ENCODE measurements at regions of chr1 and their contacts with region 1.

Region 1: GRCh38 chr1:235855811-235856429 is 10.8 kb downstream of the LYST start:
- DNase-seq: no peak
- H3K4me3 Mint-ChIP-seq: no peak overlapping the region
- H3K27ac Mint-ChIP-seq: no peak overlapping the region
- H3K4me1 Mint-ChIP-seq: peaks cover 47% of the 10 kb centered on the region
- H3K27me3 Mint-ChIP-seq: no peaks in the 10 kb centered on the region

Region 2: GRCh38 chr1:235495551-235495950 is 360.4 kb before region 1 on chr1:
- CTCF ChIA-PET with region 1: no interaction called
- POLR2A ChIA-PET with region 1: no interaction called
- intact Hi-C with region 1: loop called (anchors 2 kb)
- DNase-seq: no peak
- H3K4me3 Mint-ChIP-seq: no peak overlapping the region
- H3K27ac Mint-ChIP-seq: no peak overlapping the region
- H3K4me1 Mint-ChIP-seq: peaks cover 20% of the 10 kb centered on the region
- H3K27me3 Mint-ChIP-seq: no peaks in the 10 kb centered on the region

Region 3: GRCh38 chr1:235843461-235843961 is 12.4 kb before region 1 on chr1:
- CTCF ChIA-PET with region 1: interaction called, 12 read pairs
- POLR2A ChIA-PET with region 1: no interaction called
- intact Hi-C with region 1: no loop called
- DNase-seq: no peak
- H3K4me3 Mint-ChIP-seq: no peak overlapping the region
- H3K27ac Mint-ChIP-seq: no peak overlapping the region
- H3K4me1 Mint-ChIP-seq: peaks cover 48% of the 10 kb centered on the region
- H3K27me3 Mint-ChIP-seq: no peaks in the 10 kb centered on the region

Region 4: GRCh38 chr1:235876402-235877097 is 20.6 kb after region 1 on chr1:
- CTCF ChIA-PET with region 1: no interaction called
- POLR2A ChIA-PET with region 1: interaction called, 7 read pairs
- intact Hi-C with region 1: loop called (anchors 1 kb)
- DNase-seq: peak; percentile 27
- H3K4me3 Mint-ChIP-seq: peak overlapping the region; percentile 4
- H3K27ac Mint-ChIP-seq: peak overlapping the region; percentile 56
- H3K4me1 Mint-ChIP-seq: peaks cover 64% of the 10 kb centered on the region
- H3K27me3 Mint-ChIP-seq: no peaks in the 10 kb centered on the region

Region 5: DNA sequence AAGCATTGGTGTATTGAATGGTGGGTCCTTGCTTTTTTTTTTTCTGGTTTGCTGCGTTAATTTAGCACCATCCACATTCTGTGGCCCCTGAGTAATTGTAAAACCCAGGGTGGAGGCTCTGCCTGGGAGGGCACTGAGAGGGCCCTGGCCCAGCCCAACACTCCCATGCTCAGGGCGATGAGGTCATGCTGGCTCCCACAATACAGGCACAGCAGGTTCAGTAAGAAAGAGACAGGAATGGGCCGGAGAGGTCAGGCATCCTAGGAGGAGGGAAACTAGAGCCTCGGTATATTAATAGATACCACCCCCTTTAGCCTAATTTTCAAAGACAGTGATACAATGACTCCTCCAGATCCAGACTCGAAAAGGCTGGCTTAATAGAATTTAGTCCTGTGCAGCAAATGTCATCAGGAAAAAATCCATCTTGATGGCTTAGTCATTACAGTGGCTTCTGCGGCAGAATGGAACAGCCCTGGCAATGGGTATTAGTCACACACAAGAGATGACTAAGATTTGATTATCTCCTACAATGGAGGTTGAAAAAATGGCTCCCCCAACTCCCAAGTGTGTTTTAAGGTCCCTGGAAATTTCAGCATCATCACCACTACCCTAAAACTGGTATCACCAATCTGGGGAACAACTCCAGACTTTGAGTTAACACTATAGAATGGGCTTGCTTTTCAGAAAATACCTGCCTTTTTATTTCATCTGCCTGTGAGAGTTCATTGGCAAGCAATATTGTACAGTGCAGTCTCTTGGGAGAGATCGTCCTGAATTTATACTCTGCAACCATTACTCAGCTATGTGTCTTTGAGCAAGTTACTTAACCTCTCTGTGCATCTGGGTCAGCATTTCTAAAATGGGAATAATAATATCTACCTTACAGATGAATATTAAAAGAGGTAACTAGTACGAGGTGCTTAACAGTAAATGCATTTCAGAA is 54.7 kb after region 1 on chr1:
- CTCF ChIA-PET with region 1: no interaction called
- POLR2A ChIA-PET with region 1: no interaction called
- intact Hi-C with region 1: loop called (anchors 1 kb)
- DNase-seq: peak; percentile 73
- H3K4me3 Mint-ChIP-seq: no peak overlapping the region
- H3K27ac Mint-ChIP-seq: peak overlapping the region; percentile 44
- H3K4me1 Mint-ChIP-seq: peaks cover 23% of the 10 kb centered on the region
- H3K27me3 Mint-ChIP-seq: no peaks in the 10 kb centered on the region

Region 6: DNA sequence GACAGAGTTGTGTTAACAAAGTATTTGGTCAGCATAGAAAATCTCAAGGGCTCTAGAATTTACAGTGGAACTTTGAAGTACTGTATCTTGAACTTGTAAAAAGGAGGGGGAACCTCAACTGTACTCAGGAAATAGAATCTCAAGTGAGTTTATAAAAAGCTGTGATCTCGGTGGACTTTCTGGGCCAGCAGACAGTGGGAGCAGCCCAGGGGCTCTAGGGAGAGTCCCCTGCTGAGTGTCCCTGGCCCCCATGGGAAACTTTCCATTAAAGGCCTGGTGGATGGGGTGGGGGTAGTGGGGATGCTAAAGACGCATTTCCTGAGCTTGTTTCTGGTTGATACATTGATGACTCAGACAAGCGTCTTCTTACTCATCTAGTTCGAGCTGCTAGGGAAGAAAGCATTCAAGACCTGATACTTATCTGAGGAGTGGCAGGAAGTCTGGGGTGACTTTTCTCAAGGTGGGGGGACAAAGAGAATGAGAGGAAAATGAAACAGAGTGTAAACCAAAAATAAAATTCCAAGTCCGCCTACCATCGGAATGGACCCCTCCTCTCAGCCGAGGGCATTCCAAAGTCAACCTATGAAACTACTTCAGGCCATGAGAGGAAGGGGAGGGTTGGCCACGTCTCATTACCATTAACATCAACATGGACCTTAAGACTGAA is 143.5 kb after region 1 on chr1:
- CTCF ChIA-PET with region 1: no interaction called
- POLR2A ChIA-PET with region 1: interaction called, 3 read pairs
- intact Hi-C with region 1: loop called (anchors 2 kb)
- DNase-seq: peak; percentile 83
- H3K4me3 Mint-ChIP-seq: peak overlapping the region; percentile 53
- H3K27ac Mint-ChIP-seq: peak overlapping the region; percentile 89
- H3K4me1 Mint-ChIP-seq: peaks cover 53% of the 10 kb centered on the region
- H3K27me3 Mint-ChIP-seq: no peaks in the 10 kb centered on the region